ENCODE measurements at regions of chr13 and their contacts with region 1.

Region 1: GRCh38 chr13:74569251-74569650 is 435.0 kb upstream of the KLF12 start:
- DNase-seq: no peak
- H3K4me3 ChIP-seq: no peak overlapping the region
- H3K27ac ChIP-seq: no peak overlapping the region
- H3K4me1 ChIP-seq: no peaks in the 10 kb centered on the region
- H3K27me3 ChIP-seq: peaks cover 2 to 3% of the 10 kb centered on the region in 2 experiments
- CTCF ChIP-seq: no peak
- POLR2A ChIP-seq: no peak

Region 2: DNA sequence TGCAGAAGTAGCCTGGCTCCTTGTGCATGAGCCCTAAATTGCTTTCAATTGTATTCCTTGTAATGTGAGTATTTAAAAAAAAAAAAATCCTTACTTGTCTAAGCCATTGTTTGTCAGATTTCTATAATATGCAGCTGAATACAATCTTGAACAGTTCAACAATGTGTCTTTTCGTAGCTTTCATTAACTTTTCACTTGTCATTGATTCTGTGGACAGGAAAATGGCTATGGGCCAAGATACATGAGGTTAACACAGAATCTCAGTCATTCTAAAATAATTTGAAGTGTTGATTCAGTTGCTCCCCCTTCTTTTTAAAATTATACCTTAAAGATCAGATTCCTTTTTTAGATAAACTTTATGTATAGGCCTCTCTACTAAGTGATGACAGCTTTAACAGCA is 39.2 kb before region 1 on chr13:
- CTCF ChIA-PET with region 1: interaction called, 5 read pairs
- POLR2A ChIA-PET with region 1: no interaction called
- dilution Hi-C with region 1: no loop called
- intact Hi-C with region 1: loop called (anchors 5 kb)
- DNase-seq: no peak
- H3K4me3 ChIP-seq: no peak overlapping the region
- H3K27ac ChIP-seq: no peak overlapping the region
- H3K4me1 ChIP-seq: no peaks in the 10 kb centered on the region
- H3K27me3 ChIP-seq: no peaks in the 10 kb centered on the region
- CTCF ChIP-seq: no peak
- POLR2A ChIP-seq: no peak

Region 3: GRCh38 chr13:74675182-74675581 is 105.9 kb after region 1 on chr13:
- CTCF ChIA-PET with region 1: no interaction called
- POLR2A ChIA-PET with region 1: no interaction called
- dilution Hi-C with region 1: no loop called
- intact Hi-C with region 1: no loop called
- DNase-seq: no peak
- H3K4me3 ChIP-seq: no peak overlapping the region
- H3K27ac ChIP-seq: no peak overlapping the region
- H3K4me1 ChIP-seq: no peaks in the 10 kb centered on the region
- H3K27me3 ChIP-seq: no peaks in the 10 kb centered on the region
- CTCF ChIP-seq: no peak
- POLR2A ChIP-seq: no peak